ENCODE measurements at regions of chr21 and their contacts with region 1.

Region 1: DNA sequence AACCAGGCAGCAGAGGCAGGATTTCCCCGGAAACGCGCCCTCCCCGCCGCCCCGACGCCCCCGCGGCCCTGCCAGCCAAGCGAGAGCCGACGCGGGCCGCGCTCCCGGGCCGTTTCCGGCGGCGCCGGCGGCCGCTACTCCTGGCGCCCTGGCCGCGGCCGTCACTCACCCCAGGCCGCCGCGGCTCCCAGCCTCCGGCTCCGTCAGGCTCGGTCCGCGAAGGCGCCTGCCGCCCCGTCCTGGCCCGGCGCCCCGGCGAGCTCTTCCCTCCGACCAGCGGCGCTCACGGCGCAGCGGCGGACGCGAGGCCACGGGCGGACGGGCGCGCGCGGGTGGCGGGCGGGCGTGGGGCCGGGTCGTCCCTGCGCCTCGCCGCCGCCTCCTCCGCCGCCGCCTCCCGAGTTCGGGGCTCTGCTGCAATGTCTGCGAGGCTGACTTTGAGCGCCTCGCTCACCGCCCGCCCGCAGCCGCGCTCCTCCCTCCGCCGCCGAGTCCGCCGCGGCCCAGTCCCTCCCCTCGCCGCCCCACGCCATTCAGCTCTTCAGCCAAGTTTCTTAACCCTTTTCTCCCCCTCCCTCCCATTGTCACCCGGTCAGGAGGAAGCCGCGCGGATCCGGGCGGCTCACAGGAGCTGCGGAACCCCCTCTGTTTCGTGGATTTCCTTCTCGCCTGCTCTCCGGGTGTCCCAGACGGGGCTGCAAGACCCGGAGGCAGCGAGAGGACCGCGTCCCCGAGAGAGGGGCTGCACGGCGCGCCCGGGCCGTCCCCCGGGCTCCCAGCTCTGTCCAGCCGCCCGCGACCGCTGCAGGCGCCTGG is at the start of gene NRIP1:
- DNase-seq: peak; percentile 86 to 91
- ATAC-seq: peak; percentile 84 to 86
- H3K4me3 ChIP-seq: peak within 1 kb of the TSS; percentile 85 to 93 (median 90)
- H3K27ac ChIP-seq: peak within 1 kb of the TSS; percentile 95 to 99 (median 97)
- H3K4me1 ChIP-seq: peaks cover 32 to 43% of the 10 kb centered on the region in 2 donors
- H3K27me3 ChIP-seq: no peaks in the 10 kb centered on the region
- CTCF ChIP-seq: no peak
- POLR2A ChIP-seq: peak; percentile 95 to 96
- total RNA-seq, gene NRIP1: 35.7 to 63.7 (median 41.0) TPM

Region 2: DNA sequence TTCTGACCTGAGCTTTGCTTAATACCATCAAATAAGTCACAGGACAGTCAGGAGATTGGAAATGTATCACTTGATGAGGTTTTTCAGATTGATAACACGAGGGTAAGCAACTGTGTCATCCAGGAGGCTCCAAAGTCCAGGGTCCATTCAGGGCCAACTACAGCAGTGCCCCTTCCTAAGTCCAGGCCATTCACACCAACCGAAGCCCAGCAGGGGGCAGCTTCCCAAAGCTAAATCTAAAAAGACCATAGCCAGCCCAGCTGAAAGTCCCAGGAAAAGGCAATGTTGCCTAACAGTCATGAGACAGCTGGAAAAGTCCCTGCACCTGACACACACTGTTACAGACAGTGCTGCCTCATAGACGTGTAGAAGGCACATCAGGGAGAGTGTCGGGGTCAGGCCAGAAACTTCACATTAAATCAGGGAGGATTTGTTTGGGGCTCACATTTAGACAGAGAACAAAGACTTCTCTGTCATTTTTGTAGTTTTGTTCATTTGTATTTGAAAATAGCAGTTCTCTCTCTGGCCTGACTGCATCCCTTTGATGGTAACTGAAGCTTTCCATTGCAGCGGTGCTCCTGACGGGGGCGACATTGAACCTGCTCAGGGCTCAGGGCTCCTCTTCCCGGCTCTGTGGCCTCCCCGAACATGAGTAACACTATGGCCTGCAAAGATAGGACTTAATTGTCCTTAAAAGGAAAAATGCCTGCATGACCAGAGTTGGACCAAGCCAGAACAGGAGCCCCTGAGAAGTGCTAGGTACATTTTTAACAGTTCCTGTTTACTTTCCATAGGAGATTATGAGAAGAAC is 200.4 kb before region 1 on chr21:
- in situ Hi-C with region 1: loop called in 1 of 4 experiments (anchors 25 kb)
- intact Hi-C with region 1: loop called (anchors 2 kb)
- DNase-seq: peak; percentile 59 to 76
- ATAC-seq: peak; percentile 97 to 98
- H3K4me3 ChIP-seq: no peak overlapping the region
- H3K27ac ChIP-seq: peak overlapping the region in 2 of 4 donors; percentile 8 to 34
- H3K4me1 ChIP-seq: peaks cover 13% of the 10 kb centered on the region in 2 donors
- H3K27me3 ChIP-seq: no peaks in the 10 kb centered on the region
- CTCF ChIP-seq: peak; percentile 41 to 74 (median 56)
- POLR2A ChIP-seq: no peak

Region 3: DNA sequence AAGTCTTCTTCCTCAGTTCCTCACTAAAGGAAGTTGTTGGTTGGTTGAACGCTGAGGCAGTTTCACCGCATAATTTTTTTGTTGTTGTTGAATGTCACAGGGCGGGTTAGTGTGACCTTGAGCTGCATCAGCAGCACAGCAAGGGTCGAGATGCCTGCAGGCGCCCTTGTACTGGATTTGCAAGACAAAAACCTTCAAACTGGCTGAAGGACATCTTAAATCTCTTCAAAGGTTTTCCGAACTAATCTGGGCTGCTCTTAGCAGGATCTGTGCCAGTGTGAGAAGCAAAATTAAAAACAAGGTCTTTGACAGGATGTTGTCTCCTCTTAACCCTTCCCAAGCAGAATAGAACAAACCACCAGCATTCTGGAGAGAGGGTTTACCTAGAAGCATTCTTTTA is 59.4 kb before region 1 on chr21:
- in situ Hi-C with region 1: no loop called
- intact Hi-C with region 1: loop called (anchors 2 kb)
- DNase-seq: no peak
- ATAC-seq: no peak
- H3K4me3 ChIP-seq: no peak overlapping the region
- H3K27ac ChIP-seq: peak overlapping the region in 3 of 4 donors; percentile 42 to 84 (median 82)
- H3K4me1 ChIP-seq: peaks cover 64 to 86% of the 10 kb centered on the region in 2 donors
- H3K27me3 ChIP-seq: no peaks in the 10 kb centered on the region
- CTCF ChIP-seq: no peak
- POLR2A ChIP-seq: no peak

Region 4: GRCh38 chr21:15301014-15301413 is 236.2 kb after region 1 on chr21:
- in situ Hi-C with region 1: no loop called
- intact Hi-C with region 1: loop called (anchors 10 kb)
- DNase-seq: peak; percentile 43 to 67
- ATAC-seq: peak; percentile 88 to 92
- H3K4me3 ChIP-seq: no peak overlapping the region
- H3K27ac ChIP-seq: peak overlapping the region; percentile 24 to 60 (median 48)
- H3K4me1 ChIP-seq: peaks cover 6 to 8% of the 10 kb centered on the region in 2 donors
- H3K27me3 ChIP-seq: no peaks in the 10 kb centered on the region
- CTCF ChIP-seq: no peak
- POLR2A ChIP-seq: no peak